ENCODE measurements at regions of chr14 and their contacts with region 1.

Region 1: DNA sequence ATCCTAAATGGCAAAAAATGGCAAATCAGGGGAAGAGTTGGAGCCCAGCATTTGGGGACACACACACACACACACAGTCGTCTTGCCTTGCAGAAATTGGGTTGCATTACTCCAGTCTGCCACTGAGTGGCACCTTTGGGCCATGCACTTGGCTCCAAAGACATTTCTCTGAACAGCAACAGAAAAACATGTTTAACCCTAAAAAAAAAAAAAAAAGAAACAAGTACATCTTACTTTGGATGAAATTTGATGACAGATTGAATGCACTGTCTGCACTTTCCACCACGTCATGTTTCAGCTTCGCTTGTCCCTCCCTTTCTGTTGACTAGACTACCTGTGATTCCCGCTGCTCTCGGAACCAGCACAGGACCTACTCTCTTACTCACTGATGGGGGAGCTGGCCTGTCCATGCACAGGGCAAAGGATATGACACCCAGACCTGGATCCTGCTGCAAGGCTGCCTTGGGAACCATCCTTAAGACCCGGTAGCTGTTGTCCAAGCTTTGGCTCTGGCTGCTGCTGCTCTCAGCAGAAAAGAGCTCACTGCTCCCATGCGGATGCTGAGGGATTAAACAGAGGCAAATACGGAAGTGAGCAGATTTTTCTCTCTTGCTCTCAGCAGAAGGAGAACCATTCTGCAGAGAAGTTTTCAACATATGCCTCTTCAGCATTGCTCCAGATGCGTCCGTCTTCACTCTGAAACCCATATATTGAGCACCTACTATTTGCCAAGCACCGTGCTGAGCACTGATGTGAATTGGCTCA is 376.8 kb downstream of the DPF3 start:
- DNase-seq: peak; percentile 19 to 84
- H3K4me3 ChIP-seq: no peak overlapping the region
- H3K27ac ChIP-seq: no peak overlapping the region
- H3K4me1 ChIP-seq: no peaks in the 10 kb centered on the region; a peak in 2 of 7 replicates
- H3K27me3 ChIP-seq: no peaks in the 10 kb centered on the region
- CTCF ChIP-seq: peak; percentile 81 to 83 (median 82)
- EP300 ChIP-seq: no peak
- POLR2A ChIP-seq: no peak
- RAD21 ChIP-seq: peak; percentile 94 to 95

Region 2: GRCh38 chr14:72544619-72545387 is 27.7 kb after region 1 on chr14:
- CTCF ChIA-PET with region 1: interaction called, 66 read pairs
- POLR2A ChIA-PET with region 1: no interaction called
- DNase-seq: peak; percentile 9 to 59
- H3K4me3 ChIP-seq: no peak overlapping the region
- H3K27ac ChIP-seq: no peak overlapping the region
- H3K4me1 ChIP-seq: peaks cover 3 to 10% (median 8%) of the 10 kb centered on the region in 4 experiments
- H3K27me3 ChIP-seq: no peaks in the 10 kb centered on the region; a peak in 1 of 7 replicates
- CTCF ChIP-seq: no peak
- EP300 ChIP-seq: no peak
- POLR2A ChIP-seq: peak in 1 of 2 experiments; percentile 39; a peak in 1 of 3 replicates
- RAD21 ChIP-seq: peak in 1 of 2 experiments; percentile 19; a peak in 2 of 4 replicates

Region 3: DNA sequence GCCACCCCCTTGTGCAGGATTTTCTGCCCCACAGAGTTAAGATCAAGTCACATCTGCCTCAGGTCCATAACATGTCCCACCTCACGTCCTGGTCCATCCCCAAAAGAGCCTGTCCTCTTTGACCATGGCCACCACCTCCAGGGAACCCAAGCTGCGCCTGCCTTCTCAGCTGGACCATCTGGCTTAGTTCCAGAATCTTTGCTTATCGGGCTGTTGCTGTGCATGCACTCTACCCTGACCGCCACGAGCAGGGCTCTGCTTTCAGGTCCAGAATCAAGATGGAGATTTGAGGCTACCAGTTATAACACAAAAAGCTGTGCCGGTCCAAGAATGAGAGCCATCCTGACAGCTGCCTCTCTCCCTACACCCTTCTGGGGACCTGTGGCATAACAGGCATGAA is 50.1 kb after region 1 on chr14:
- CTCF ChIA-PET with region 1: interaction called, 11 read pairs
- POLR2A ChIA-PET with region 1: no interaction called
- DNase-seq: no peak
- H3K4me3 ChIP-seq: no peak overlapping the region
- H3K27ac ChIP-seq: no peak overlapping the region
- H3K4me1 ChIP-seq: no peaks in the 10 kb centered on the region
- H3K27me3 ChIP-seq: no peaks in the 10 kb centered on the region
- CTCF ChIP-seq: no peak
- EP300 ChIP-seq: no peak
- POLR2A ChIP-seq: no peak
- RAD21 ChIP-seq: no peak

Region 4: GRCh38 chr14:72688990-72689671 is 172.0 kb after region 1 on chr14:
- CTCF ChIA-PET with region 1: interaction called, 13 read pairs
- POLR2A ChIA-PET with region 1: no interaction called
- DNase-seq: peak in 1 of 2 experiments; percentile 45
- H3K4me3 ChIP-seq: no peak overlapping the region
- H3K27ac ChIP-seq: no peak overlapping the region
- H3K4me1 ChIP-seq: peaks cover 0 to 7% (median 4%) of the 10 kb centered on the region in 4 experiments; a peak in 5 of 7 replicates
- H3K27me3 ChIP-seq: no peaks in the 10 kb centered on the region
- CTCF ChIP-seq: peak in 1 of 3 experiments; percentile 15; a peak in 1 of 4 replicates
- EP300 ChIP-seq: no peak
- POLR2A ChIP-seq: no peak
- RAD21 ChIP-seq: peak in 1 of 2 experiments; percentile 4; a peak in 1 of 4 replicates

Region 5: DNA sequence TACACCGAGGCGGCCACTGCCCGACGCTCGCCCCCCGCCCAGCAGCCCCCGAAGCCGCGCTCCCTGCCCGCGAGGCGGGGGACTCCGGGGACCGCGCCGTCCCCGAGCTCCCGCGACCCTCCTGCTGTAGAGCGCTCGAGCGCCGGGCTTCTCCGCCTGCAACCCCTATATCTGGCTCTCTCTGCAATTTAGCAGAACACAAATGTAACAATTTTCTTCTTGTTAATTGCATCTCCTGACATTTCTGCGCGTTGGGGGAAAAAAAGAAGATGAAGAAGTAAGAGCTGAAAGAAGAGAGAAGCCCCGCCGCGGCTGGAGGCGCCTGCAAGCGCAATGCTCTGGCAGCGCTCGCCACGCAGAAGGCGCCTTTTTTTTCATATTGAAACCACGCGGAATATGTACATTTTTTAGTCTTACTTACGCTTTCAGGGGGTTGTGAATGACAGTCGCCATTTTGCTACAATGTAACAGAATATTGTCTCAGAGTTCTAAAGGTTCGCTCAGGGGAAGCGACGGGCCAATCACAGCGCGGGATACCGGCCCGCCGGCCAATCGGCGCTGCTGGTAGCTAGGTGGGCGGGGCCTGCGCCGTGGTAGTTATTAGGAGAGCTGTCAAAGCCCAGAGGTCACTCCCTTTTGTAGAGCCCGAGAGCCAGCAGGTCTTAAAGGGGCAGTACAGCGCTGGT is 376.7 kb after region 1 on chr14 and contains the start of gene DPF3:
- CTCF ChIA-PET with region 1: interaction called, 10 read pairs
- POLR2A ChIA-PET with region 1: no interaction called
- DNase-seq: peak; percentile 80 to 96
- H3K4me3 ChIP-seq: peak within 1 kb of the TSS; percentile 58 to 83 (median 68)
- H3K27ac ChIP-seq: no peak within 1 kb of the TSS
- H3K4me1 ChIP-seq: peaks cover 12 to 24% (median 14%) of the 10 kb centered on the region in 4 experiments
- H3K27me3 ChIP-seq: peaks cover 20 to 59% (median 52%) of the 10 kb centered on the region in 4 experiments
- CTCF ChIP-seq: no peak
- EP300 ChIP-seq: no peak
- POLR2A ChIP-seq: no peak
- RAD21 ChIP-seq: no peak
- total RNA-seq, gene DPF3: 0.08 and 0.19 TPM in 2 replicates

Region 6: DNA sequence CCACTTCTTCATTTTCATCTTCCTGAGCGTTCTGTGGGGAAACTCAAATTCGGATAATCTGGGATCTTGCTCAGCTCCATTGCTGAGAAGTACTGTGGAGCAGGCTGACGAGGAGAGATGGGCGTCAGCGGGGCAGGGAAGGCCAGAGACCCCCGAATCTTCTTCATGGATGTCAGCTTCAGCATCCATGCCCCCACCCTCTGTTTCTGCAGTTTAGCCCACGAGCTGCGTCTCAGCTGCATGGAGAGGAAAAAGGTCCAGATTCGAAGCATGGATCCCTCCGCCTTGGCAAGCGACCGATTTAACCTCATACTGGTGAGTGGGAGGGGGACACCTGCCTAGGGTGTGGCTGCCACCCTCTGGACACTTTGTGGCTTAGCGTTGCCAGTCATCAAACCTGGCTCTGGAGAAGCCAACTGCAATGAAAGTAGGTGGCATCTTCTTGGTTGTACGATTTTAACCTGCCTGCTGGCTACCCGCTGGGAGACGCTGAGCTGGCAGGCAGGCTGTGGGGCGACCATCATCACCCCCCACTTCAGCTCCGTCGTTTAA is 425.7 kb after region 1 on chr14:
- CTCF ChIA-PET with region 1: interaction called, 107 read pairs
- POLR2A ChIA-PET with region 1: no interaction called
- DNase-seq: no peak
- H3K4me3 ChIP-seq: no peak overlapping the region
- H3K27ac ChIP-seq: no peak overlapping the region
- H3K4me1 ChIP-seq: no peaks in the 10 kb centered on the region
- H3K27me3 ChIP-seq: no peaks in the 10 kb centered on the region
- CTCF ChIP-seq: peak; percentile 28 to 54 (median 45); a peak in 3 of 4 replicates
- EP300 ChIP-seq: no peak
- POLR2A ChIP-seq: no peak
- RAD21 ChIP-seq: peak; percentile 65 to 72